ENCODE measurements at regions of chr6 and their contacts with region 1.

Region 1: DNA sequence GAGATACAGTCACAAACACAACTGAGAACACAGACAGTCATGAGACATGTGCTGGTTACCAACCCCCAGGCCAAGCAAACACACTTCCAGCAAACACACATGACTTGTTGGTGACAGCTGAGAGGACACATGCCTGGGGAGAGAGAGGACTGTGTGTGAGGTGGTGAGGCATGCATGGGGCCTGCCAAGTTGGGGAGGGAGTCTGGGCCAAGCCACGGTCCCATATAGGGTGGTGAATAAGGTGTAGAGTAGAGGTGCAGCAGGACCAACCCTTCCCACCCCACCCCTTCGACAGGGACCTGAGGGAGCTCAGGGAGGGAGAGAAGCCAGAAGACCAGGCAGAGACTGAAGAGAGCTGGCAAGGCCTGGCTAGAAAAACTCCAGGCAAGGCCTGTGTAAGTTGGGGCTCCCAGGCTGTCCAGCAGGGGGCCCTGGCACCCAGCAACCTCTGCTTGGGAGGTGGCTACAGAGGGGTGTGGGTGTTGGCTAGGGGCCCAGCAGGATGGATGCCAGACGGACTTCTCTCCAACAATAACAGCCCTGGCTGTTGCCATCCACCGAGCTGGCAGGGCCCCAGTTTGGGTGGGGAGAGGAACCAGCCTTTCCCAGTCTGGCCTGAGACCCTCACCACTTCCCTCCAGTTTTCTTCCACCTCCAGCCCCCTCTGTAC is 2.0 kb upstream of the SLC29A1 start:
- DNase-seq: peak; percentile 77 to 91
- H3K4me3 ChIP-seq: no peak overlapping the region
- H3K27ac ChIP-seq: no peak overlapping the region
- H3K4me1 ChIP-seq: peaks cover 35% of the 10 kb centered on the region
- H3K27me3 ChIP-seq: no peaks in the 10 kb centered on the region
- CTCF ChIP-seq: peak; percentile 86

Region 2: DNA sequence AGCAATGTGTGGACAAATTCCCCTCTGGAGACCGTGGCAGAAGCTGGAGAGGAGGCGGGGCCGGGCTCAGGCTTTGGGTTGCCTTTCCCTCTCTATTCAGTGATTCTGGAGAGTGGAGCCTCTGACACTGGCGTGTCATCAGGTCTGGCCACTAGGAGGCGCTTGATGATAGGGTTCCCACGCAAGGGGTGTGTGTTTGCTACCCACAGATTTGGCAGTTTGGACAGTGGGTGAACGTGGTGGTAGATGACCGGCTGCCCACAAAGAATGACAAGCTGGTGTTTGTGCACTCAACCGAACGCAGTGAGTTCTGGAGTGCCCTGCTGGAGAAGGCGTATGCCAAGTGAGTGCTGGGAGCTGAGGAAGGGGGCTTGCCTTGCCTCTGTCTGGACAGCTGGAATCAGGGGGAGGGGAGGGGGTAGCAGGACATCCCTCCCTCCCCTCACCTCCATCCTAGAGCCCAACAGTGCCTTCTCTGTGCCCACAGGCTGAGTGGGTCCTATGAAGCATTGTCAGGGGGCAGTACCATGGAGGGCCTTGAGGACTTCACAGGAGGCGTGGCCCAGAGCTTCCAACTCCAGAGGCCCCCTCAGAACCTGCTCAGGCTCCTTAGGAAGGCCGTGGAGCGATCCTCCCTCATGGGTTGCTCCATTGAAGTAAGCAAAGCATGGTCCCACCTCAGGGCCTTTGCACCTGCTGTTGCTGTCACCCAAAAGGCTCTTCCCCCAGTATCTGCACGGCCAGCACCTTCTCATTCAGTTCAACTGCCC is 48.5 kb before region 1 on chr6:
- CTCF ChIA-PET with region 1: interaction called, 9 read pairs
- POLR2A ChIA-PET with region 1: no interaction called
- intact Hi-C with region 1: loop called (anchors 1 kb)
- DNase-seq: peak; percentile 67 to 74
- H3K4me3 ChIP-seq: no peak overlapping the region
- H3K27ac ChIP-seq: no peak overlapping the region
- H3K4me1 ChIP-seq: no peaks in the 10 kb centered on the region
- H3K27me3 ChIP-seq: 0 out of 2 replicates have a peak, but pooled peaks cover 10% of the 10 kb centered on the region
- CTCF ChIP-seq: peak; percentile 92

Region 3: DNA sequence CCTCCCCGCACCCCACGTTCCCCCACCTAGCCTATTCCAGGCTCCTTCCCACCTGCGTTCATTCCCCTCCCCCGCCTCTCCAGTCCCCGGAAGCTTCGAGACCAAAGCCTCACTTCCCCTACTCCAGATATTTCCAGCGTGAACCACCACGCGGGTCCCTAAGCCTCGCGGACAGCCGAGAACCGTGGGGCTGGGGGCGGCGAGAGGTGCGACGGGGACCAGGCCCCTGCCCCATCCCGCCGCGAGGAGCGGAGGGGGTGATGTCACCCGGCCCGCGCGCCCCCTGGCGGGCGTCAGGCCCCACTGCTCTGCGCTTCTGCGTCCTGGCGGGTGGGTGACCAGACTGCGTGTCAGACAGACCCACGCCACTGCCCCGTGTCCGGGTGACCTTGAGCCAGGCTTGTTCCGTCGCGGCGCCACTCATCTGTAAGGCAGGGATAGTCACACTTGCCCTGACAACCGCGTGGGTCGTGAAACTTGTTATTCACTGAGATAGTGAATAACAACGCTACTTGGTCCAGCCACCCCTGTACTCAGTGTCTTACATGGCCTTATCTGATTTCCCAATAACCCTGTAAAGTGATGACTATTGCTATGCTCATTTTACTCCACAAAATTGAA is 16.5 kb after region 1 on chr6:
- CTCF ChIA-PET with region 1: interaction called, 6 read pairs
- POLR2A ChIA-PET with region 1: interaction called, 6 read pairs
- intact Hi-C with region 1: loop called (anchors 1 kb)
- DNase-seq: peak; percentile 36 to 78
- H3K4me3 ChIP-seq: peak overlapping the region; percentile 63
- H3K27ac ChIP-seq: no peak overlapping the region
- H3K4me1 ChIP-seq: peaks cover 17% of the 10 kb centered on the region
- H3K27me3 ChIP-seq: no peaks in the 10 kb centered on the region
- CTCF ChIP-seq: peak; percentile 98

Region 4: DNA sequence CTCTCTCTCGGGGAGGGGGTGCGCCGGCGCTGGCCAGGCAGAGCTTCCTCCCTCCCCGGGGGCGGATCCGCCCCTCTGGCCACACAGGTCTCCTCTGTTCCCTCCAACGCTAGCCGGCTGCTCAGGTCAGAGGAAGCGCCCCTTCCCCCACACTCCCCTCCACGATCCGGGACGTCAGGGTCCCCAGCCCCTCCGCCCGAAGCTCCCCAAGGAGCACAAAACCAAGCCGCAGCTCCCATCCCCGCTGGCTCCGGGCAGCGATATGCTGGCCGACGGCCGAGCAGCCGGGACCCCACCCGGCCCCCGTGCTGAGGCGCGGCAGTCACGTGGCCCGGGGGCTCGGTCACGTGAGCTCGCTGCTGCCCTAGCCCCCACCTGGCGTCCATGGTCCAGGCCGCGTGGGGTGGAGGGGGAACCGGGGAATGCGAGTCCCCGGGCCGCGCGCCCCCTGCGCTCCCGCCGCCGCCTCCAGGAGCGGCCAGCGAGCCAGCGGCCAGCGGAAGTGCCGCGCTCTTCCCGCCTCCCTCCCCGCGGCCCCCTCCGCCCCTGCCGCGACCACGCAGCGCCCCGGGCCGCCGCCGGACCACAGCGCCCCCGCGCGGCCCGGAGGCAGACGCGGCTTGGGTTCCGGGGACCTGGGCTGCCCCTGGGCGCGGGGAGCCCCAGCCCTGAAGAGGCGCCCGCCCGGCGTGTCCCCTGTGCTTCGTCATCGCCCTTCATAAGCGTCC is 35.8 kb after region 1 on chr6 and contains the start of gene SLC35B2:
- CTCF ChIA-PET with region 1: no interaction called
- POLR2A ChIA-PET with region 1: no interaction called
- intact Hi-C with region 1: loop called (anchors 1 kb)
- DNase-seq: peak; percentile 59 to 79
- H3K4me3 ChIP-seq: peak within 1 kb of the TSS; percentile 78
- H3K27ac ChIP-seq: peak within 1 kb of the TSS; percentile 36
- H3K4me1 ChIP-seq: peaks cover 16% of the 10 kb centered on the region; the same call in 1 of the 2 replicates
- H3K27me3 ChIP-seq: no peaks in the 10 kb centered on the region
- CTCF ChIP-seq: no peak
- total RNA-seq, gene SLC35B2: 57.6 and 59.7 TPM in 2 replicates